Activated CD4-positive, alpha-beta T cell treated with anti-CD3 and anti-CD28 coated beads for 36 hours (primary cell): ENCODE measurements at regions of chr16 and their contacts with region 1.

Region 1: DNA sequence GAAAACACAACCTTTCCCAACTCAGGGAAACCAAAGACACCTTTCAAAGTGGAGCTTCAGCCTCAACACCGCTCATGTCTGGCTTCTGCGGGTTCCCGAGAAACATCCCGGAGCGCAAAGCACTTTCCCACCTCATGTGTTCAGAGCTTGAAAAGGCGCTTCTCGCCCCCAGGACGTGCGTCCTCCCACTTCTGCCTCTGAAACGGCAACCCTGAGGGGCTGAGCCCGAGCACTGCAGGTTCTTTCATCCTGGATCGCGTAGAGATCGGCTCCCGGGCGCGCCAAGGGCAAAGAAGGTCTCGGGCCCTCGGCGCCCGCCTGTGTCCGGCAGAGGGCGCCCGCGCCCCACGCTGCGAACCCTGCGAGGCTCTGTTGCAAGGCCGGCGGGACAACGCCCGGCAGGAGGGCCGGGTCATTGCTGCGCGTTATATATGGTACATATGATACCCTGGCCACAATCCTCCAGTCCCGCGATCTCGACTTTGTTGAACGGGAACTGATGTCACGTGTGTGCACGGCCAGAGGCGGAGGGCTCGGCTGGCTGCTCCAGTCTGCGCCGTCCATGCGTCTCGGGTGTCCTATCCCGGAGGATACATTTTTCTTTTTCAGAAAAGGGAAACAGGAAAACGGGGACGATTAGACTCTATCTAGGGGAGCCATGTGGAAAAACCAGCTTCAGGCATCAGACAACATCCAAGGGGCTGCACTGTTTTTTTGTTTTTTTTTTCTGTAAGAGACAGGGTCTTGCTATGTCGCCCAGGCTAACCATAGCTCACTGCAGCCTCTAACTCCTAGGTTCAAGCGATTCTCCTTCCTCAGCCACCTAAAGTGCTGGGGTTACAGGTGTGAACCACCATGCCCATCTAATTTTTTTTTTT is 19.1 kb downstream of the COQ7 start:
- DNase-seq: peak; percentile 87
- ATAC-seq: peak; percentile 98
- H3K4me3 Mint-ChIP-seq: peak overlapping the region; percentile 35
- H3K27ac Mint-ChIP-seq: no peak overlapping the region
- H3K4me1 Mint-ChIP-seq: peaks cover 6% of the 10 kb centered on the region
- H3K27me3 Mint-ChIP-seq: peaks cover 6% of the 10 kb centered on the region

Region 2: GRCh38 chr16:18950469-18951185 is 135.9 kb before region 1 on chr16:
- CTCF ChIA-PET with region 1: no interaction called
- POLR2A ChIA-PET with region 1: no interaction called
- intact Hi-C with region 1: no loop called
- DNase-seq: no peak
- ATAC-seq: no peak
- H3K4me3 Mint-ChIP-seq: no peak overlapping the region
- H3K27ac Mint-ChIP-seq: no peak overlapping the region
- H3K4me1 Mint-ChIP-seq: peaks cover 17% of the 10 kb centered on the region
- H3K27me3 Mint-ChIP-seq: no peaks in the 10 kb centered on the region

Region 3: GRCh38 chr16:19005561-19006445 is 80.8 kb before region 1 on chr16:
- CTCF ChIA-PET with region 1: no interaction called
- POLR2A ChIA-PET with region 1: no interaction called
- intact Hi-C with region 1: no loop called
- DNase-seq: no peak
- ATAC-seq: no peak
- H3K4me3 Mint-ChIP-seq: no peak overlapping the region
- H3K27ac Mint-ChIP-seq: no peak overlapping the region
- H3K4me1 Mint-ChIP-seq: peaks cover 3% of the 10 kb centered on the region
- H3K27me3 Mint-ChIP-seq: no peaks in the 10 kb centered on the region

Region 4: DNA sequence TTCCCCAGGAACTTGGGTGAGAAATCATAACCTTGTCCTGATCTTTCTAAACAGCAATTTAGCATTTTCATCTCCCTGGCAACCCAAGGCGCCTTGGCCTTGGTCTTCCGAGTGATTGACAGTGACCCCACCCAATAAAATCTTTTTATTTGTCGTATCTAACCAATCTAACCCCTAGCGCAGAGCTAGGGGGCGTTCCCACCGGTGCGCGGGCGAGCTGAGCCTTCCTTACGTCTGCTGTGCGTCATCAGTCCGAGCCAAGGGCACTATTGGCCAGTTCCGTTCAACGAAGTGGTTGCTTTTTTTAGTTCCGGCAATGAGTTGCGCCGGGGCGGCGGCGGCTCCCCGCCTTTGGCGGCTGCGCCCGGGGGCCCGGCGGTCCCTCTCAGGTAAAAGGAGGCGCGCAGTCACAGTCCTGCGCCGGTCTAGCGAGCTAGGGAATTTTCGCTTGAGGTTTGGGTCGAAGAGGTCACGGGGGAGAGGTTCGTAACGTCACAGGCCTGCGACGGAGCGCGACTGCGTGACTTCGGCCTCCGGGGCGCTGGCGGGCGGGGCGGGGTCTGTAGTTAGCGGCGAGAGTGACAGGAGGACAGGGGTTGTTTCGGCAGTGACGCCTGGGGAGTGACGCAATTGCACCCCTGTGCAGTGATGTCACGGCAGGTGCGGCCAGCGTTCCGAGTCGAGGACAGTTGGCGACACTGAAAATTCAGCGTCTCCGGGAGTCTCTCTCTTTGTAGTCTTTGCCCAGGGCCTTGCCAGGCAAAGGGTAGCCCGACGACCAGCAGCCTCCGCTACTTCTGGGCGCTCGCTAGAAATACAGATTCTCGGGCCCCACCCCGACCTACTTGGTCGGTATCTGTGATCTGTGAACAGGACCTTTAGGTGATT is 19.0 kb before region 1 on chr16 and contains the start of gene COQ7:
- CTCF ChIA-PET with region 1: interaction called, 11 read pairs
- POLR2A ChIA-PET with region 1: interaction called, 5 read pairs
- intact Hi-C with region 1: no loop called
- DNase-seq: peak; percentile 99
- ATAC-seq: peak; percentile 95
- H3K4me3 Mint-ChIP-seq: peak within 1 kb of the TSS; percentile 86
- H3K27ac Mint-ChIP-seq: peak within 1 kb of the TSS; percentile 96
- H3K4me1 Mint-ChIP-seq: peaks cover 10% of the 10 kb centered on the region
- H3K27me3 Mint-ChIP-seq: peaks cover 2% of the 10 kb centered on the region
- total RNA-seq, gene COQ7: 13.2 to 16.0 TPM

Region 5: DNA sequence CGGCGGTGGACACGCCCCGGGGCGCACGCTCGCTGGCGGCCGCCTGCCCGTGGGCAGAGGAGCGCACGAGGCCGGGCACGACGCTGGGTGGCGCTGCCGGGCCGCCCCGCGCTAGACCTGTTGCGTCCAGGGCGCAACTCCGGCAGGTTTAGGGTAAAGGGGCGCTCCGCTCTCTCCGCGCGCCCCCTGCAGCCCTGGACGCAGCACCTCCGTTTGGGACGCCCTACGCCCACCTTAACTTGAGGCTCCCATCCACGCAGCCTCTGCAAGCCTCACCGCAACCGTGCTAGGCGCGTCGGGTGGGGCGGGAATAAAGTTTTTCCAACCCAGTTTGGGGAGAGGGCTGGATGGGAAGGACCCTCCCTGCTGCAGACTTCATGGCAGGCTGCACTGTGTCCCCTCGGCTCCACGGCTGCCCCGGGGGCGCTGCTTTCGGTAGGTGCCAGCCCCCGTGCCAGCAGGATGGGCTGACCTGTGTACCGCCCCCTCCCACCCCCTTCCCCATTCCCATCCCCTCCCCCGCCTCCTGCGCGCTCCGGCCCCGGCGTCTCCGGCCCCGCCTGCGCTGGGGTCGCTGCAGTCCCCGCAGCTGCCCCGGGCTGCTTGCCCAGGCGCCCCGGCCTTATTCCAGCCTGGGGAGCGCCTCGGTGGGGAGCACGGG is 81.3 kb after region 1 on chr16 and contains the start of gene SYT17:
- CTCF ChIA-PET with region 1: interaction called, 3 read pairs
- POLR2A ChIA-PET with region 1: no interaction called
- intact Hi-C with region 1: loop called in 1 of 2 experiments (anchors 1 kb)
- DNase-seq: peak; percentile 77
- ATAC-seq: peak; percentile 97
- H3K4me3 Mint-ChIP-seq: no peak within 1 kb of the TSS
- H3K27ac Mint-ChIP-seq: no peak within 1 kb of the TSS
- H3K4me1 Mint-ChIP-seq: no peaks in the 10 kb centered on the region
- H3K27me3 Mint-ChIP-seq: peaks cover 18% of the 10 kb centered on the region
- total RNA-seq, gene SYT17: not detected

Region 6: DNA sequence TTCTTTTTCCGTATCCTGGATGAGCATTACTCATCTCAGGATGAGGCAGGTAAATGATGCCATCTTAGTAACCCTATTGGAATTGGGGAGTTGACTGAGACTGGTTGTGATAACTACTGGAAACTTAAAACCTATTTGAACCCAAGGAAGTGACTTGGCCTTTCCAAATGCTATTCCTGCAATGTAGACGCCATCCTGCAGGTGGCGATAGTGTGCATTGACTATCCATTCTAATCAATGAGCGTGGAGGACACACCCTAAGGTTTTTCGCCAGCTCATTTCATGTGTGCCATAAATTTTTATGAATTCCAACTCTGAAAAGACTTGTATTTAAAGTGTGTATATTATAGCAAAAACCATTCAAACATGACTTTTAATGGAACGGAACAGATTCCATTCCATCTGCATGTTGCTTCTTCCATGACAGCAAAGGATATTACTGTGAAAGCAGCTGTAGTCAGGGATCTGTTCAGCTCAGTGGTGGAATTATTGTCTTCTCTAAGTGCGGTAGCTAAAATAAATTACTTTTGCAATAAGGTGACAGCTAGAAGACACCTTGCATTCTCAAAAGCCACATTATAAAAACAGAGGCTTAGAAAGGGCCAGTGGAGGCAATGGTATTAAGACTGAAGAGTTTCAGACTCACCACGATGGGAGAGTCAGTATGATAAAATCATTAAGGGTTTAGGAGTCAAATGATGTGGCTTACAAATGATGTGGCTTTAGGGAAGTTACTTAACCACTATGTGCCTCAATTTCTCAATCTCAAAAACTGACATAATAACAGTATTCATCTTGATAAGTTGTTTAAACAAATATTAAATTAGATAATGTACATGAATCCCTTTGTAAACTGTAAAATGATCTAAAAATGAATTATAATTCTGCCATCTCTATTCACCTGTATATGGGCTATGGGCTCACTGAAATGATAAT is 136.9 kb after region 1 on chr16:
- CTCF ChIA-PET with region 1: interaction called, 3 read pairs
- POLR2A ChIA-PET with region 1: no interaction called
- intact Hi-C with region 1: loop called in 1 of 2 experiments (anchors 1 kb)
- DNase-seq: peak; percentile 76
- ATAC-seq: no peak
- H3K4me3 Mint-ChIP-seq: no peak overlapping the region
- H3K27ac Mint-ChIP-seq: no peak overlapping the region
- H3K4me1 Mint-ChIP-seq: no peaks in the 10 kb centered on the region
- H3K27me3 Mint-ChIP-seq: peaks cover 11% of the 10 kb centered on the region

Region 7: DNA sequence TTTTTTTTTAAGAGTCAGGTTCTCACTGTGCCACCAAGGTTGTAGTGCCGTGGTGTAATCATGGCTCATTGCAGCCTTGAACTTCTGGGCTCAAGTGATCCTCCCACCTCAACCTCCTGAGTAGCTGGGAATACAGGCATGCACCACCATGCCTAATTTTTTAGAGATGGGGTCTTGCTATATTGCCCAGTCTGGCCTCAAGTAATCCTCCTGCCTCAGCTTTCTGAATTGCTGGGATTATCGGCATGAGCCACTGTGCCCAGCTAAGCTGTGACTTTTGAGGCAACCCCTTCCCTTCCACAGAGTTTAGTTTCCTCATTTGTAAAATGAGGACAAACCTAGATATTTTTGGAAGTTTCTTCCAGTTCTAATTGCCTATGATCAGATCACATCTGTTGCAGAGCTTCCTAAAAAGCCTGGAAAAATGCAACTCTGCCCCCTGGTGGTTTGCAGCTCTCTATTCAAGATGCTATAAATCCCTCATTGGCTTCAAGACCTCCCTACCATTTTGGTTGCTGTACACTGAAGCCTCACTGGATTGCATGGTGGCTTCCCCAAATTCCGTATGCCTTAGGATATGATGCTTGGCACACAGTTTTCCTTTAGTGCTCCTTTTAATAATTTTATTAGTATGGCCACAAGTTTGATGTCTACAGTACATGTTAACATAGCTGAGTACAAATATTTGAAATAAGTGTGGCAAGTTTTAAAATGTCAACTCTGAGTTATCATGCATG is 416.0 kb after region 1 on chr16:
- CTCF ChIA-PET with region 1: interaction called, 23 read pairs
- POLR2A ChIA-PET with region 1: interaction called, 4 read pairs
- intact Hi-C with region 1: loop called (anchors 1 kb)
- DNase-seq: peak; percentile 83
- ATAC-seq: peak; percentile 53
- H3K4me3 Mint-ChIP-seq: no peak overlapping the region
- H3K27ac Mint-ChIP-seq: no peak overlapping the region
- H3K4me1 Mint-ChIP-seq: no peaks in the 10 kb centered on the region
- H3K27me3 Mint-ChIP-seq: no peaks in the 10 kb centered on the region

Region 8: DNA sequence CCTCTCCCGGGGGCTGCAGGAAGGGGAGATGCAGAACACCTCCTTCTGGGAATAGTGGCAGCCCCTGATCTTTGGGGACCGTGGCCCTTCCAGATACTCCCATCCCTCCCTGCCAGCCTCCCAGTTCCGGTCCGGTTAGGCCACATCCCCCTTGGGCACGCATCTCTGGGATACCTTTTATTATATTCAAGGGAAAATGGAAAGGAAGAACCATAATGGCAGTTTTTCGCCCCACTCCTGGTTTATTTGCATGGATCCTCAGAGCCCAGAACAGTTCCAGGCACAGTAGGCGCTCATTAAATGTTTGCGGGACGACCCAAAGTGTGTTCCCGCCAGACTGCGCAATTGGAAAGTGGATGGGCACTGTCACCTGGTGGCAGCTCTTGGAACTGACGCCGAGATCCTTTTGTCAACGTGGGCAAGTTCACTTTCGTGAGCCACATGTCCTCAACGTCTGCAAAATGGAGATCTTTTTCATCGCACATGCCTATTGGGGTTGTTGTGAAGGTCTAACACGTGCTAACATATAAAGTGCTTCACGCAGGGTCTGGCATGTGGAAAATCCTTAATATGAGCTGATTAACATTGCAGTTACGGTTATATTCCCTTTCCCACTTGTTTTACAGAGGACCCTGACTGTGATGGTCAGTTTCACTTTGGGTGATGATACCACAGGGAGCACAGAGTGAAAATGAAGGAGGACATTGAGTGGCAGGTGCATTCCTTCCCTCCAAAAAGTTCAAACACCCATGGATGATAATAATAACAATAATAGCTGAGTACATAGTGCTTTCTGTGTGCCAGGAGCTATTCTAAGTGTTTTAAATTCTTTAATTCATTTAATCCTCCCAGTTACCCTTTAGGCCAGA is 799.7 kb after region 1 on chr16:
- CTCF ChIA-PET with region 1: no interaction called
- POLR2A ChIA-PET with region 1: no interaction called
- intact Hi-C with region 1: loop called in 1 of 2 experiments (anchors 10 kb)
- DNase-seq: peak; percentile 90
- ATAC-seq: peak; percentile 79
- H3K4me3 Mint-ChIP-seq: peak overlapping the region; percentile 71
- H3K27ac Mint-ChIP-seq: peak overlapping the region; percentile 47
- H3K4me1 Mint-ChIP-seq: peaks cover 26% of the 10 kb centered on the region
- H3K27me3 Mint-ChIP-seq: peaks cover 18% of the 10 kb centered on the region